HCT116 (cell line): ENCODE measurements at regions of chr17 and their contacts with region 1.

Region 1: GRCh38 chr17:59753522-59754467 is 46.3 kb downstream of the VMP1 start:
- DNase-seq: peak; percentile 88
- ATAC-seq: peak; percentile 41
- H3K4me3 ChIP-seq: peak overlapping the region in 1 of 2 experiments; percentile 2; a peak in 1 of 4 replicates
- H3K27ac ChIP-seq: peak overlapping the region; percentile 91
- H3K4me1 ChIP-seq: peaks cover 81 to 94% of the 10 kb centered on the region in 2 experiments
- H3K27me3 ChIP-seq: no peaks in the 10 kb centered on the region
- CTCF ChIP-seq: peak; percentile 68 to 94 (median 91)
- POLR2A ChIP-seq: no peak
- RAD21 ChIP-seq: peak; percentile 98

Region 2: GRCh38 chr17:59695945-59696692 is 57.7 kb before region 1 on chr17:
- CTCF ChIA-PET with region 1: no interaction called
- POLR2A ChIA-PET with region 1: no interaction called
- RAD21 ChIA-PET with region 1: no interaction called
- intact Hi-C with region 1: no loop called
- DNase-seq: no peak
- ATAC-seq: peak; percentile 35
- H3K4me3 ChIP-seq: no peak overlapping the region
- H3K27ac ChIP-seq: no peak overlapping the region
- H3K4me1 ChIP-seq: no peaks in the 10 kb centered on the region
- H3K27me3 ChIP-seq: no peaks in the 10 kb centered on the region
- CTCF ChIP-seq: no peak
- POLR2A ChIP-seq: no peak
- RAD21 ChIP-seq: no peak

Region 3: GRCh38 chr17:59778996-59779395 is 25.2 kb after region 1 on chr17:
- CTCF ChIA-PET with region 1: interaction called, 22 read pairs
- POLR2A ChIA-PET with region 1: interaction called, 78 read pairs
- RAD21 ChIA-PET with region 1: interaction called in 1 of 2 experiments, 3 read pairs
- intact Hi-C with region 1: loop called (anchors 1 kb)
- DNase-seq: no peak
- ATAC-seq: no peak
- H3K4me3 ChIP-seq: no peak overlapping the region
- H3K27ac ChIP-seq: peak overlapping the region; percentile 36
- H3K4me1 ChIP-seq: peaks cover 61 to 68% of the 10 kb centered on the region in 2 experiments
- H3K27me3 ChIP-seq: no peaks in the 10 kb centered on the region
- CTCF ChIP-seq: no peak
- POLR2A ChIP-seq: no peak
- RAD21 ChIP-seq: no peak

Region 4: DNA sequence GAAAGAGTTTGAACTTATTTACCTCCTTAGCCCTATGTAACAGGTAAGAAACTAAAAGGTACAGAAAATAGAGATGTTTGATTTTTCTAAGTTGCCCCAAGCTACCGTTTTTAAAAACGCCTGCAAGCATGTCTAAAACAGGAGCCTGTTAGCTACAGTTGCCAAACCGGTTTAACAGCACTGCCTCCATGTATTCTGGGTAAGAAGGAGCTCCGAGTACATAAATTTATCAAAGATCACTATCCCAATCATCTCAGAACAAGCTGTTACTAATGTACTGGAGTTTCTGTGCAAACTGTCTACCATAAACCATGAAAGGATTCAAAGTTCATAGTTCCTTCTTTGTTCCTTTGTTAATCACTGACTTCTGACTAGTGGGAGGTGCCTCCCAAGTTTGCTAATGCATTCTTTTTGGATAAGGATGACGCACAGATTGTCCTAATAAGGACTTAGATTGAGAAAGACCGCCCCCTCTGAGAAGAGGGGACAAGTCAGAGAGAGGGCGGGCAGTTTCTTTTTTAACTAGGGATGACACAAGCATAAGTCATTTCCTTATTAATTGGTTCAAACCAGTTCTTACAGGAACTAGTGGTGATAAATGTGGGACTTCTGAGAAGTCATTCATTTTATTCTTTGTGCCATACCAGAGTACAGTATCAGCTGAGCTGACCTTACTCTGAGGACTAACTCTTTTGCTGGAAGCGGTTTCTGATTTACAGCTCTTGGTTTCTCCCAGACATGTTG is 83.7 kb after region 1 on chr17:
- CTCF ChIA-PET with region 1: interaction called, 40 read pairs
- POLR2A ChIA-PET with region 1: interaction called, 443 read pairs
- RAD21 ChIA-PET with region 1: interaction called, 4 read pairs
- intact Hi-C with region 1: no loop called
- DNase-seq: peak; percentile 100
- ATAC-seq: peak; percentile 81
- H3K4me3 ChIP-seq: peak overlapping the region; percentile 74 to 78
- H3K27ac ChIP-seq: peak overlapping the region; percentile 97
- H3K4me1 ChIP-seq: peaks cover 65 to 84% of the 10 kb centered on the region in 2 experiments
- H3K27me3 ChIP-seq: no peaks in the 10 kb centered on the region
- CTCF ChIP-seq: no peak
- POLR2A ChIP-seq: peak; percentile 99
- RAD21 ChIP-seq: no peak

Region 5: GRCh38 chr17:59859444-59860025 is 105.7 kb after region 1 on chr17:
- CTCF ChIA-PET with region 1: interaction called, 57 read pairs
- POLR2A ChIA-PET with region 1: interaction called, 8 read pairs
- RAD21 ChIA-PET with region 1: interaction called, 11 to 12 read pairs
- intact Hi-C with region 1: loop called (anchors 1 kb)
- DNase-seq: no peak
- ATAC-seq: peak; percentile 67
- H3K4me3 ChIP-seq: no peak overlapping the region
- H3K27ac ChIP-seq: no peak overlapping the region
- H3K4me1 ChIP-seq: peaks cover 18 to 32% of the 10 kb centered on the region in 2 experiments; a peak in 3 of 4 replicates
- H3K27me3 ChIP-seq: no peaks in the 10 kb centered on the region
- CTCF ChIP-seq: peak; percentile 44 to 88 (median 80); a peak in 4 of 6 replicates
- POLR2A ChIP-seq: no peak
- RAD21 ChIP-seq: peak; percentile 97